Caki2 (cell line): ENCODE measurements at regions of chr10 and their contacts with region 1.

Region 1: GRCh38 chr10:124388823-124389612 is 29.7 kb downstream of the OAT start:
- DNase-seq: peak; percentile 58

Region 2: GRCh38 chr10:123994417-123995081 is 394.5 kb before region 1 on chr10:
- in situ Hi-C with region 1: loop called (anchors 25 kb)
- DNase-seq: peak; percentile 83